Aorta (tissue), 5 donors: ENCODE measurements at regions of chr2 and their contacts with region 1.

Region 1: GRCh38 chr2:222903234-222904220 is 42.7 kb downstream of the ACSL3 start:
- DNase-seq: no peak
- ATAC-seq: peak; percentile 79
- H3K4me3 ChIP-seq: no peak overlapping the region
- H3K27ac ChIP-seq: peak overlapping the region in 1 of 2 donors; percentile 71
- H3K4me1 ChIP-seq: peaks cover 6 to 10% of the 10 kb centered on the region in 2 donors
- H3K27me3 ChIP-seq: no peaks in the 10 kb centered on the region

Region 2: DNA sequence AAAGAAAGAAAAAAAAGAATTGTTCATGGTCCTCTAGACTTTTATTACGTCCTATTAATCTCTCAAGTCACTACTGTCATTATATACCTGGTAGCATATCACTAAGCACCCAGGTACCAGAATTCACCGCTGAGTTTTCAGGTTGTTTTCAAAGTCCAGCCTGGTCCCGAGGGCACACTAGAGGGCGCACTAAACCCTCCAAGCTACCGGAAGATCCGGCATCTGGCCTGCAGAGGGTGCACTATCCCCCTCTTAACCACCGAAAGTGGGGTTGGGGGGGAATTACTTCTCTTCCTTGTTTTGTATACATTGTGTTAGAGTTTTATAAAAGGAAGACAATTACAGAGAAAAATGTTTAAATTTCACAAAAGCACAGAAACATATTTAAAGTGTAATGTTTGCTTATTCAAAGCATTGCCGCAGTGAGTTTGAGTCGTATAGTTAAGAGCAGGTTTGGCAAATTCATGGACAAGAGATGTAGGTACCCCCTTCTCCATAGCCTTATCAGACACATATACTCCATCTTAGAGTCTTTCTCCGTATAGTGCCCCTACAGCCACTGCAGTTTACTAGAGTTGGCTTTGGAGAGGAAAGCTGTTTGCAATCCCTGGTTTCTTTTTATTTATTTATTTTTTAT is 212.8 kb before region 1 on chr2:
- intact Hi-C with region 1: loop called in 1 of 2 experiments (anchors 5 kb)
- DNase-seq: peak; percentile 78 to 91
- ATAC-seq: peak; percentile 90
- H3K4me3 ChIP-seq: peak overlapping the region in 1 of 2 donors; percentile 45
- H3K27ac ChIP-seq: no peak overlapping the region
- H3K4me1 ChIP-seq: peaks cover 2 to 3% of the 10 kb centered on the region in 2 donors
- H3K27me3 ChIP-seq: no peaks in the 10 kb centered on the region

Region 3: DNA sequence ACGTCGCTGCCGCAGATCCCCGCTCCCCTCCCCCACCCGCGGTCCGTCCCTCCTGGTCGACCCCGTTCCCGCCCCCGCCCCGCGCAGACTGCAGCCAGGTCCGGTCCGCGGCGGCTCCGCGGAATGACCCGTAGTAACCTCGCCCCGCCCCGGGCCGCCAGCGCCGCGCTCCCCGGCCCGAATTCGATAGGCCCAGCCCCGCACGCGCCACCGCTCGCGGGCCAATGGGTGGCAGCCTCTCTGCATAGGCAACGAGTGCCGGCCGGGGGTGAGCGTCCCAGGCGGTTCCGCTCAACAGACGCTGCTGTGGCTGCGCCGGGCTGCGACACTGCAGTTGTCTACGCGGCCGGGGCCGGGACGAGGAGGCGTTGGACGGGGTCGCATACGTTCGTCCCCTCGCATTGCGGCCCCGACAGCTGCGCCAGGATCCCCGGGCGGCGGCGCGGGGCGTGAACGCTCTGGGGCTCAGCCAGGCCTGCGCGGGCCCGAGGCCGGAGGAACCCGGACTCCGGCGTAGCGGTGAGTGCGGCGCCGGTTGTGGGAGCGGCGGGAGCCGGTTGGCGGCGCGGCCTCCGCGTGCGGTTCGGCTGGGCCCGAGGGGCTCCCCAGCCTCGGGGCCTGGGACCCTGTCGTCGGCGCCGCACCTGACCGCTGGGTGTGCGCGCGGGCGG is 42.7 kb before region 1 on chr2 and contains the start of gene ACSL3:
- intact Hi-C with region 1: loop called (anchors 5 kb)
- DNase-seq: peak; percentile 98
- ATAC-seq: peak; percentile 98
- H3K4me3 ChIP-seq: peak within 1 kb of the TSS; percentile 80 to 93
- H3K27ac ChIP-seq: peak within 1 kb of the TSS; percentile 79 to 84
- H3K4me1 ChIP-seq: peaks cover 7 to 9% of the 10 kb centered on the region in 2 donors
- H3K27me3 ChIP-seq: no peaks in the 10 kb centered on the region
- total RNA-seq, gene ACSL3: 66.5 to 69.0 TPM

Region 4: GRCh38 chr2:222866358-222866960 is 37.1 kb before region 1 on chr2:
- intact Hi-C with region 1: loop called (anchors 5 kb)
- DNase-seq: no peak
- ATAC-seq: no peak
- H3K4me3 ChIP-seq: no peak overlapping the region
- H3K27ac ChIP-seq: no peak overlapping the region
- H3K4me1 ChIP-seq: peaks cover 9 to 22% of the 10 kb centered on the region in 2 donors
- H3K27me3 ChIP-seq: no peaks in the 10 kb centered on the region